Calu3 (cell line): ENCODE measurements at regions of chr11 and their contacts with region 1.

Region 1: GRCh38 chr11:27698872-27699474 is 1.3 kb downstream of the BDNF start:
- DNase-seq: peak; percentile 92
- H3K4me3 Mint-ChIP-seq: peak overlapping the region; percentile 82
- H3K27ac Mint-ChIP-seq: peak overlapping the region; percentile 42
- H3K4me1 Mint-ChIP-seq: peaks cover 32% of the 10 kb centered on the region
- H3K27me3 Mint-ChIP-seq: no peaks in the 10 kb centered on the region
- CTCF ChIP-seq: peak; percentile 81

Region 2: GRCh38 chr11:27847496-27847895 is 148.5 kb after region 1 on chr11:
- CTCF ChIA-PET with region 1: no interaction called
- intact Hi-C with region 1: loop called (anchors 5 kb)
- DNase-seq: no peak
- H3K4me3 Mint-ChIP-seq: no peak overlapping the region
- H3K27ac Mint-ChIP-seq: no peak overlapping the region
- H3K4me1 Mint-ChIP-seq: peaks cover 10% of the 10 kb centered on the region
- H3K27me3 Mint-ChIP-seq: no peaks in the 10 kb centered on the region
- CTCF ChIP-seq: no peak

Region 3: DNA sequence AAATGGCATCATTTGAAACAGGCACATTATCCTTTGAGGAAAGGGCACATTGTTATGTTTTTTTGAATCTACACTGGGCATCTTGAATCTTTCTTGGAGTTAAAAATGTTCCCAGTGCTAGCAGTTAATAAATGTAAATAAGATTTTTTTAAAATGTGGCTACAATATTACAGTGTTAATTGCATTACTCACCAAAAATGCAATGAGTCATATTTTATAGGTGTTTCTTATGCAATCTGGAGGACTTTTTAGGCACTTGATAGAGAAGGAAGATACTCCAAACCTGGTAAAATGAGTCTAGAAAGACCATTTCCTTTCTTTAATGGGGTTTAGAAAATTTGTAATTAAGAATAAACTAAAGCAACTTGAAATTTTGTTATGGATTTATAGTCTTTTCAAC is 647.2 kb after region 1 on chr11:
- CTCF ChIA-PET with region 1: no interaction called
- intact Hi-C with region 1: loop called (anchors 5 kb)
- DNase-seq: no peak
- H3K4me3 Mint-ChIP-seq: no peak overlapping the region
- H3K27ac Mint-ChIP-seq: peak overlapping the region; percentile 36
- H3K4me1 Mint-ChIP-seq: peaks cover 20% of the 10 kb centered on the region
- H3K27me3 Mint-ChIP-seq: no peaks in the 10 kb centered on the region
- CTCF ChIP-seq: no peak

Region 4: DNA sequence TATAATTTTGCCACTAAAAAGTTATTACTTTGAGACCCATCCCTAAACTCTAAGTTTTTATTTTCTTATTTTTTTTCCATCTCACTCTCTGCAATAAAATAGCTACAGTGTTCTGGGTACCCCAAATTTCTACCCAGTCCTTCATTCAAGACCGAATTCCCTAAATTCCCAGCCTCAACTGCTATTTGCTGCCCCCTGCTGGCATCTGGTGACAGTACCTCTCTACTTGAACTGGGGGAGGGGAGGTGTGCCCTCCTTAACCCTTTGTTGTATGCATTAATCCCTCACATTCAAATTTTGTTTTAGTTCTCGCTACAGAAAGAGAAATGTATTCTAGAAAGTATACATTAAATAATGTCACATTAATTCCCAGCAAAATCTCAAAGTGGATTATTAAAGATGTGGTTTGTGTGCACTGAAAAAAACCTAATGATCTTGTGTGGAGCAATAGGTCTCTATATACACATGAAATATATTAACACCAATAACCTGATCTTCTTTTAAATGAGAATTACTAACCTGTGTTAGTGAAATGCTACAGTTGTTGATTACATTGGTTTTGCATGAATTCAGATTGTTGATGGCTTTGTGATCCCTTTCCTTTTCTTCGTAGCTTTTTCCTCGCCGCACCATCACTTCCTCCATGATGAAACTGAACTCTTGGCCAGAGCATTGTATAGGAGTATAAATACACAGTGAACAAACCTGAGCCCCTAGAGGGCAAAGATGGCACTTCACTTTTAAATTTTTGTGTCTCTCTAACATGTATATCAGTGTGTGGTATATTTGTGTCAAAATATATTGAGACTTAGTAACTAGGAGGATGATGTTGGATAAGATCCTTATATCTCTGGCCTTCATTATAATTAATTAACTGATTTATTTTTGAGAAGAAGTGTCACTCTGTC is 999.2 kb after region 1 on chr11:
- CTCF ChIA-PET with region 1: interaction called, 5 read pairs
- intact Hi-C with region 1: loop called (anchors 5 kb)
- DNase-seq: peak; percentile 68
- H3K4me3 Mint-ChIP-seq: no peak overlapping the region
- H3K27ac Mint-ChIP-seq: peak overlapping the region; percentile 81
- H3K4me1 Mint-ChIP-seq: peaks cover 74% of the 10 kb centered on the region
- H3K27me3 Mint-ChIP-seq: no peaks in the 10 kb centered on the region
- CTCF ChIP-seq: peak; percentile 90

Region 5: GRCh38 chr11:28836285-28837081 is 1137.5 kb after region 1 on chr11:
- CTCF ChIA-PET with region 1: interaction called, 4 read pairs
- intact Hi-C with region 1: loop called (anchors 2 kb)
- DNase-seq: peak; percentile 60
- H3K4me3 Mint-ChIP-seq: peak overlapping the region; percentile 59
- H3K27ac Mint-ChIP-seq: peak overlapping the region; percentile 96
- H3K4me1 Mint-ChIP-seq: peaks cover 55% of the 10 kb centered on the region
- H3K27me3 Mint-ChIP-seq: no peaks in the 10 kb centered on the region
- CTCF ChIP-seq: no peak

Region 6: GRCh38 chr11:29328961-29329441 is 1630.0 kb after region 1 on chr11:
- CTCF ChIA-PET with region 1: interaction called, 21 read pairs
- intact Hi-C with region 1: loop called (anchors 2 kb)
- DNase-seq: peak; percentile 24
- H3K4me3 Mint-ChIP-seq: no peak overlapping the region
- H3K27ac Mint-ChIP-seq: no peak overlapping the region
- H3K4me1 Mint-ChIP-seq: peaks cover 36% of the 10 kb centered on the region
- H3K27me3 Mint-ChIP-seq: no peaks in the 10 kb centered on the region
- CTCF ChIP-seq: peak; percentile 73